ENCODE measurements at regions of chr1 and their contacts with region 1.

Region 1: DNA sequence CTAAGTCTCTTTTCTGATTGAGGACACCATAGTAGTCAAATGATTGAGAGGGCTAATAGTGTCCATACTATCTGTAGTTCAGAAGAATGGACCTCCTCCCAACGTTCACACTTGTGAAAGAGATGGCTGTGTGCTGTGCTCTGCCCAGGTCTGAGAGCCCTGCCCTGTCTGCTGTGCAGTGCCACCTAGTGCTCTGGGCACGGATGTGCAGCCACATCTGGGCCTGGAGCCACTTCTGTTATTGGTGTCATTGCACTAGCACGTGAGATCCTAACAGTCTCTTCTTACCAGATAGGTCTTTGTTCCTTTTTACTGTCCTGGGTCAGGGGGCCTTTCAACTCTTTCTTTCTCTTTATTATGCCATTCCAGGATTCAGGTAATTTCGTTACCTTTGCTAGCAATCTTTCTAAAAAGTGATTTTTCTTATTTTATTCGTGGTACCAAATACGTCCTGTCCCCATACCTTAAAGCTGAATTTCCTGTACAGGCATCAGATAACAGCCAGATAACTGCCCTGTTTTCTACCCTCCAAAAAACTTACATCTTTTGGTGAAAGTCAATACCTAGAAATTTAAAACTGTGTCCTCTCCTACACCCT is 21.7 kb downstream of the INTS3 start:
- DNase-seq: peak; percentile 80 to 84 (median 82)
- ATAC-seq: peak; percentile 100
- H3K4me3 ChIP-seq: no peak overlapping the region
- H3K27ac ChIP-seq: no peak overlapping the region
- H3K4me1 ChIP-seq: no peaks in the 10 kb centered on the region; a peak in 3 of 5 replicates
- H3K27me3 ChIP-seq: no peaks in the 10 kb centered on the region
- CTCF ChIP-seq: peak; percentile 93 to 95 (median 93)
- EP300 ChIP-seq: no peak
- POLR2A ChIP-seq: no peak
- RAD21 ChIP-seq: peak; percentile 83 to 95

Region 2: DNA sequence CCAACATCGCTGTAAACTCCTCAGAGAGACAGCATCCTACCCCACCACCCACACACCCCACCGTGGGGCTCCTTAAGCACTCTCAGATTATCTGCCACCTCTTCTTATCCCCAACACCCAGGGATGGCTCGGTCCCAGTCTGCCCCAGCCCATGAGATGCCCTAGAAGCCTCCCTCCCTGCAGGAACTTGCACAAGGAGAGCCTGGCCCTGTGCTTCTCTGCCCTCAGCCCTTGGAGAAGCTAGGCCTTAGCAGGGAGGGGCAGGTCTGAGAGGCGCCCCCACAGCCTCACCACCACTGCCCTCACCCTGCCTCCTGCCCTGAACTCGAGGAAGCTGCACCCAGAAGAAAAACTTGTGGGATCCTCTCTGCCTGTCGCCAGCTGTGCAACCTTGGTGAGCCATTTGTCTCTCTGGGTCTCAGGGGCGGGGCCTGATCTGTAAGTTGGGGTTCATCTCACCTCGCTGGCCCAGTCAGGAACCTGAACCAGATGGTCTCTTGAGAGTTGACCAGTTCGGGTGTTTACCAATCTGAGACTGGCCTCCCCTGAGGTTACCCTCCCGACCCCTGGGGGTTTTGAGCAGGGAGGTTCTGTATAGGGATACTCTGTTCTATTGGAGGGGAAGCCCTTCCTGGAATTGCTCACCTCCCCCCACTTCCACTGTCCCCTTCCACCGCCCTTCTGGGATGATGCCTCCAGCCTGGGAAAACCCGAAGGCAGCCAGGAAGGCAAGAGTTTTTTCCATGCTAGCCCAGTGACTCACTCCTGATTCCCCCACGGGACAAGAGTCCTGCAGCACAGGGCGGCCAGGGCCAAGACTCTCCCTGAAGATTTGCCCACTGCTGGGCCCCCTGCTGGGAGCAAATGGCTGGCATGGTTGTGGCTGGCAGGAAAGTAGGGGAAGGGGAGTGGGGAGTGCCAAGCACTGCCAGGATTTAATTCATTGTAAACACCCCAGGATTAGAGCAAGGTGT is 200.5 kb before region 1 on chr1 and contains the start of gene S100A3:
- CTCF ChIA-PET with region 1: no interaction called
- POLR2A ChIA-PET with region 1: no interaction called
- in situ Hi-C with region 1: no loop called
- intact Hi-C with region 1: no loop called
- DNase-seq: no peak
- ATAC-seq: no peak
- H3K4me3 ChIP-seq: no peak within 1 kb of the TSS
- H3K27ac ChIP-seq: no peak within 1 kb of the TSS
- H3K4me1 ChIP-seq: peaks cover 55 to 63% of the 10 kb centered on the region in 2 experiments
- H3K27me3 ChIP-seq: no peaks in the 10 kb centered on the region
- CTCF ChIP-seq: no peak
- EP300 ChIP-seq: no peak
- POLR2A ChIP-seq: no peak
- RAD21 ChIP-seq: no peak
- polyA plus RNA-seq, gene S100A3: 0.08 TPM in 1 of 2 experiments, not detected in the other

Region 3: DNA sequence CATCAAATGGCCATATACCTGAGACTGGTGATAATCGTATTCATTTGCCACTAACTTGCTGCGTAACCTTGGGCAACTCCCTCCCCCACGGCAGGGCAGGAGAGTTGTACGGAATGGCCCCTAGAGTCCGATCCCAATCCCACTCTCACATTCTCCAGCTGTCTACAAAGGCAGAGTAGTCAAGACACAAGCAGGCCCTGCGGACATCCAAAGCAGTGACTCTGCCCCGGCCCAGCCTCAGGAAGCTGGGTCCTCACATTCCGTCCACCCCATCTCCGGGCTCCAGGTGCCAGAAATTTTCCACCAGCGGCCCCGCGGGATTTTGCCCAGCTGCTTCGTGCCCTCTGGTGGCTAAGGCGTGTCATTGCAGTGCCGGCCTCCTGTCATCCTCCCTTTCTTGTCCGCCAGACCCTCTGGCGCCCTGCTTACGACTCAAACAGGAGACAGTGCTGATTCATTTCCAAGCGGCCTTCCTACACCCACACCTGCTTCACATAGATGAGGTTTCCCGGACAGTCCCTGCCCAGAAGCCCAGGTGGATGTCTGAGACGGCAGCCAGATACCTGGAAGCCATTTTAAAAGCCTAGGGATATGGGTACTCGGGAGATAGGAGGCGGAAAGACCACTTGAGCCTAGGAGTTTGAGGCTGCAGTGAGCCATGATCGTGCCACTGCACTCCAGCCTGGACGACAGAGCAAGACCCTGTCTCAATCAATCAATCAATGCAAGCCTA is 181.0 kb before region 1 on chr1:
- CTCF ChIA-PET with region 1: no interaction called
- POLR2A ChIA-PET with region 1: no interaction called
- in situ Hi-C with region 1: no loop called
- intact Hi-C with region 1: loop called (anchors 5 kb)
- DNase-seq: peak; percentile 89 to 92 (median 90)
- ATAC-seq: peak; percentile 81
- H3K4me3 ChIP-seq: no peak overlapping the region
- H3K27ac ChIP-seq: peak overlapping the region; percentile 63; the same call in 2 of the 3 replicates
- H3K4me1 ChIP-seq: peaks cover 38% of the 10 kb centered on the region in 2 experiments
- H3K27me3 ChIP-seq: no peaks in the 10 kb centered on the region
- CTCF ChIP-seq: peak; percentile 97 to 98 (median 98)
- EP300 ChIP-seq: peak; percentile 49; the same call in 1 of the 2 replicates
- POLR2A ChIP-seq: no peak
- RAD21 ChIP-seq: peak; percentile 99

Region 4: DNA sequence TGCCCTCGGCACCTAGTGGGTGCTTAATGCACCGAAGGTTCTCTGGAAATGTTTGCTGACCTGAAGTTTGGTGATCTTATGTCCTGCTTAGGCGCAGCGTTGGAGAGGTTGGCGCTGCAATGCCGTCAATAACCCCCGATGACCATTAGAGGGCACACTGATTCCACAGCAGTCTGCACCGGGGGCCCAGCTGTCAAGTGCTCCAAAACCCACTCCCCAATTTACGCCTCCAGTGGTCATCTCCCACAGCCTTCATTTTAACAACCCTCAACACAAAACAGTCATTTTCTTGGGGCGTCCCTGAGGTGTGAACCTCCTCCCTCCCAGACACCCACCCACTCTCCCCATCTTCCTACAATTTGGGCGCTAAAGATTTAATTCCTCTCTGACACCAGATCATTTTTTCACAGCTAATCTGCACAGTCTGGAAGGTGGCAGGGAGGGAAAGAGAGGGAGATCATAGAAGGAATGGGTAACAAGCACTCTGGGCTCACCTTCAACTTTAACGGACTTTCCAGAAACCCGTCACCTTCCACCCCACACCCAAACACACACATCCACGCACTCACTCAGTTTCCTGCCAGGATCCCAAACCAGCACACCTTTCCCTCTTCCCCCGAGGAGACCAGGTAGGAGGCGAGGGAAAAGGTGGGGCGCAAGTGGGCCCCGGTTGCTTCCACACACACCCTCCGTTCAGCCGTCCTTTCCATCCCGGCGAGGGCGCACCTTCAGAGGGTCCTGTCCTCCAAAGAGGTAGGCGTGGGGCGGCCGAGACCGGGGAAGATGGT is 71.6 kb before region 1 on chr1:
- CTCF ChIA-PET with region 1: interaction called, 18 read pairs
- POLR2A ChIA-PET with region 1: no interaction called
- in situ Hi-C with region 1: no loop called
- intact Hi-C with region 1: loop called (anchors 1 kb)
- DNase-seq: peak; percentile 54 to 72 (median 62)
- ATAC-seq: peak; percentile 85
- H3K4me3 ChIP-seq: no peak overlapping the region
- H3K27ac ChIP-seq: no peak overlapping the region
- H3K4me1 ChIP-seq: peaks cover 0 to 19% of the 10 kb centered on the region in 2 experiments; a peak in 3 of 5 replicates
- H3K27me3 ChIP-seq: peaks cover 33 to 45% of the 10 kb centered on the region in 2 experiments; a peak in 4 of 5 replicates
- CTCF ChIP-seq: peak; percentile 91 to 95 (median 93)
- EP300 ChIP-seq: no peak
- POLR2A ChIP-seq: no peak
- RAD21 ChIP-seq: peak; percentile 86 to 94

Region 5: GRCh38 chr1:153698020-153698931 is 51.2 kb before region 1 on chr1:
- CTCF ChIA-PET with region 1: no interaction called
- POLR2A ChIA-PET with region 1: no interaction called
- in situ Hi-C with region 1: loop called (anchors 5 kb)
- intact Hi-C with region 1: no loop called
- DNase-seq: peak; percentile 50 to 77 (median 64)
- ATAC-seq: peak; percentile 88
- H3K4me3 ChIP-seq: no peak overlapping the region
- H3K27ac ChIP-seq: peak overlapping the region; percentile 87
- H3K4me1 ChIP-seq: peaks cover 19 to 28% of the 10 kb centered on the region in 2 experiments
- H3K27me3 ChIP-seq: no peaks in the 10 kb centered on the region
- CTCF ChIP-seq: no peak
- EP300 ChIP-seq: no peak
- POLR2A ChIP-seq: no peak; the same call in 1 of the 2 replicates
- RAD21 ChIP-seq: no peak

Region 6: GRCh38 chr1:153922972-153923925 is 173.7 kb after region 1 on chr1 and contains the start of gene GATAD2B:
- CTCF ChIA-PET with region 1: no interaction called
- POLR2A ChIA-PET with region 1: no interaction called
- in situ Hi-C with region 1: no loop called
- intact Hi-C with region 1: no loop called
- DNase-seq: peak; percentile 92 to 100 (median 96)
- ATAC-seq: peak; percentile 94
- H3K4me3 ChIP-seq: peak within 1 kb of the TSS; percentile 86
- H3K27ac ChIP-seq: peak within 1 kb of the TSS; percentile 98
- H3K4me1 ChIP-seq: peaks cover 9 to 28% of the 10 kb centered on the region in 2 experiments
- H3K27me3 ChIP-seq: no peaks in the 10 kb centered on the region
- CTCF ChIP-seq: 0 out of 6 replicates have a peak, but pooled peaks of 1 of the 3 experiments have one; percentile 0
- EP300 ChIP-seq: 0 out of 2 replicates have a peak, but pooled peaks have one; percentile 8
- POLR2A ChIP-seq: peak; percentile 72
- RAD21 ChIP-seq: no peak
- polyA plus RNA-seq, gene GATAD2B: 1.5 to 6.6 TPM

Measured in K562 (cell line).